ENCODE measurements at regions of chr11 and their contacts with region 1.

Region 1: DNA sequence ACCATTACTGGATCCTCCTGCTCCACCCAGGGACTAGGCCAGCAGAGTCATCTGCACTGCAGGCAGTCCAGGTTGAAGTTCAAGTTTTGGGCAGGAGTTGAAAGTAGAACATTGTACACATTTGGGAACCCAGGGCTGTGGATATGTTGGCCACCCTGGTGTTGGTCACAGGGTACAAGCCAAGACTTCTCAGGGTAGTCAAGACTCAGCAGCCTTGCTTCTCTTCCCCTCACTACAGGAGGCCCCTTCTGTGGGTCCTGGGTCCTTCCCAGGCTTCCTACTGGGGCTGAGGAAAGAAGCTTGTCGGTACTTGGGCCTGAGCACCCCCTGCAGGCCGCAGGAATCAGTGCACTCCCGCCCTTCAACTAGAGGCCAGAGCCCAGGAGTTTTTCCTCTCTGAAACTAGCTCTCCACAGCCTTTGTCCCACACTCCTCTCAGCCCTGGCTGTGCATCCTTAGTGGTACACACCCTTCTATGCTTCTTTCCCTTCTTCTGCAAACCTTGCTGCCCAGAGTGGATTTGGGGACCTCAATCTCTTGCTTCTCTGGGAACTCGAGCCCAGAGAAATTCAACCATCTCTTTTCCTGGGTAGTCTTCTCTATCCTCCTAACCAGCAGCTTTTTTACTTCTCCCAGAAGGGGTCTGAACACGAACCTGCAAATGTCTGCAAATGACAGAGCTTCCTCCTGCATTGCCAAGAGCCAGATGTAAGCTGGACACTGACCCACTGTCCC is 2.6 kb upstream of the HPX start:
- DNase-seq: peak in 1 of 2 experiments; percentile 77
- H3K4me3 ChIP-seq: no peak overlapping the region
- H3K27ac ChIP-seq: no peak overlapping the region
- H3K4me1 ChIP-seq: peaks cover 0 to 4% (median 0%) of the 10 kb centered on the region in 4 experiments; a peak in 2 of 7 replicates
- H3K27me3 ChIP-seq: no peaks in the 10 kb centered on the region
- CTCF ChIP-seq: peak; percentile 79 to 95 (median 92)
- EP300 ChIP-seq: no peak
- POLR2A ChIP-seq: no peak
- RAD21 ChIP-seq: peak; percentile 81 to 82

Region 2: DNA sequence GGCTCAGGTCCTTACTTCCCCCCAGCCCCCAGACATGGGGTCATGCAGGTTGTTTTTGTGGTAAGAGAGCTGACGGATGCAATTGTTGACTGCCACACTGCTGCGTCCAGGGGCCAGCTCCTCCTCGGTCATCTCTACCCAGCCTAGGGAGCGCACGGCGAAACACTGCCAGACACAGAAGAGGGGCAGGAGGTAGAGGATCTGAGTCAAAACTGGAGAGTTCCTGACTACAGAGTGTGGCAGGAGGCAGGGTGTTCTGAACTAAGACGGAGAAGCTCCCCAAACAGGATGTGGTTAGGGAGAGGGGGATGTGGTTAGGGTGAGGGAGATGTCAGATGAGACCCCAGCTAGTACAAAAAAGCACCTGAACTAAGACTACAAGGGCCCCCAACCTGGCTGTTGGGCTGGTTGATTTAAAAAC is 40.9 kb before region 1 on chr11:
- CTCF ChIA-PET with region 1: interaction called, 79 read pairs
- POLR2A ChIA-PET with region 1: no interaction called
- DNase-seq: no peak
- H3K4me3 ChIP-seq: no peak overlapping the region
- H3K27ac ChIP-seq: no peak overlapping the region
- H3K4me1 ChIP-seq: peaks cover 8 to 15% (median 10%) of the 10 kb centered on the region in 4 experiments
- H3K27me3 ChIP-seq: no peaks in the 10 kb centered on the region
- CTCF ChIP-seq: no peak
- EP300 ChIP-seq: no peak
- POLR2A ChIP-seq: no peak
- RAD21 ChIP-seq: no peak

Region 3: DNA sequence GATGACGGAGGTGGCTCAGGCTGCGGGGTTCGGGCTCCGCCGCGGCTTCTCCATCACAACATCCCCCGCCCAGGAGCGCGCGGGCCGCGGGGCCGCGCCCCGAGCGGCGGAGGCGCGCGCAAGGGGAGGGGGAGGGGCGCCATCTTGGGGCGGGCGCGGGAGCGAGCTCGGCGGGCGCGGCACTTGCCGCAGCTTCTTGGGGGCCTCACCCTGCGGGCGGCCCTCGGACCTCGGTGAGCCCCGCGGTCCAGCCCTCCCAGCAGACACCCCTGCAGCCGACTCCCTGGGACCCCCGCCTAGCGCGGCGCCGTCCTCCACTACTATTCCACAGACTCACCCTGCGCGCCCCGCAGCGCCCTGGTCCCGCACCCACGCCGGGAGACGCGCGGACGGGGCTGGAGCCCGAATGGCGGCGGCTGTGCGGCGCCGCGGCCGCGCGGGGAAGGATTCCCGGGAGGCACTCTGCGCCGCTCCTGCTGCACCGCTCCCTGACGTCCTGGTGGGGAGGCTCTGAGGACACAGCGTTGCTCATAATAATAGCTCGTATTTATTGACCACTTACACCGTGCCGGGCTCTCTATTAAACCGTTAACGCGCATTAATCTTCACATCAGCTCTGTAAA is 24.3 kb before region 1 on chr11 and contains the start of gene APBB1:
- CTCF ChIA-PET with region 1: interaction called, 78 read pairs
- POLR2A ChIA-PET with region 1: interaction called, 5 read pairs
- DNase-seq: peak in 1 of 2 experiments; percentile 81
- H3K4me3 ChIP-seq: peak within 1 kb of the TSS; percentile 78 to 97 (median 86)
- H3K27ac ChIP-seq: no peak within 1 kb of the TSS
- H3K4me1 ChIP-seq: peaks cover 2 to 5% (median 4%) of the 10 kb centered on the region in 4 experiments; a peak in 4 of 7 replicates
- H3K27me3 ChIP-seq: peaks cover 1 to 13% (median 7%) of the 10 kb centered on the region in 4 experiments
- CTCF ChIP-seq: no peak
- EP300 ChIP-seq: no peak
- POLR2A ChIP-seq: peak in 1 of 2 experiments; percentile 65; a peak in 2 of 3 replicates
- RAD21 ChIP-seq: no peak
- total RNA-seq, gene APBB1: 23.6 and 23.9 TPM in 2 replicates

Region 4: DNA sequence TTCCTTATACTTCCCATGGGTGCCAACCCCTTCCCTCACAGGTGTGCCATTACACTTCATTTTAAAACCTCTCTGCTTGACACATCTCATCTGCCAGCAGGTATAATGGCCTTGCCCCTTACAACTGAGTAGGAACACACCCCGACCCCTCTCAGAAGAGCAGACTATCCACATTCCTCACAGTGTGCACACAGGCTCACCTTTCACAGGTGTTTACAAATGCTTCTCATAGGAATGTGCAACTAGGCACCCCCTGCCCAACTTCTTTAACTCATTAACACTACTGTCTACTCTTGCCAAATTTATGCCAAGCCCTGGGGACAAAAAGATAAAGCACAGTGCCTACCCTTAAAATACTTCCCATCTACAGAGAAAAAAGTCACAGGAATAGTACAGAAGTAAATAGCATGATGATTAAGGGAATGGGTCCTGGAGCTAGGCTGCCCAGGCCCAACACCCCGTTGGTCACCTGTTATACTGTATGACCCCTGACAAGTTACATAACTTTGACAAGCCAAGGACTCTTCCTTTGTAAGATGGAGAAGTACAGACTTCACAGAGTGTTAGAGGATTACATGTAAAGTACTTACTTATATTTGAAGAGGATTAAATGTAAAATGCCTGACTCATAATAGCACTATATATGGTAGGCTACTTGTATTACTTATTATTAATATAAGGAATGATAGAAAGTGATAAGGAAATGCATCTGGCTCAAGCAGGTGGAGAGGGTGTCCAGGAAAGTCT is 15.1 kb after region 1 on chr11:
- CTCF ChIA-PET with region 1: interaction called, 179 read pairs
- POLR2A ChIA-PET with region 1: interaction called, 5 read pairs
- DNase-seq: no peak
- H3K4me3 ChIP-seq: no peak overlapping the region
- H3K27ac ChIP-seq: no peak overlapping the region
- H3K4me1 ChIP-seq: no peaks in the 10 kb centered on the region
- H3K27me3 ChIP-seq: no peaks in the 10 kb centered on the region
- CTCF ChIP-seq: no peak
- EP300 ChIP-seq: no peak
- POLR2A ChIP-seq: no peak
- RAD21 ChIP-seq: no peak

Region 5: GRCh38 chr11:6488342-6488741 is 44.9 kb after region 1 on chr11:
- CTCF ChIA-PET with region 1: interaction called, 10 read pairs
- POLR2A ChIA-PET with region 1: no interaction called
- DNase-seq: no peak
- H3K4me3 ChIP-seq: no peak overlapping the region
- H3K27ac ChIP-seq: no peak overlapping the region
- H3K4me1 ChIP-seq: no peaks in the 10 kb centered on the region
- H3K27me3 ChIP-seq: no peaks in the 10 kb centered on the region
- CTCF ChIP-seq: no peak
- EP300 ChIP-seq: no peak
- POLR2A ChIP-seq: no peak
- RAD21 ChIP-seq: no peak

Measured in H1 (cell line).